HCT116 (cell line): ENCODE measurements at regions of chr1 and their contacts with region 1.

Region 1: GRCh38 chr1:158124999-158125398 is 55.7 kb upstream of the CD1D start:
- DNase-seq: peak; percentile 89
- ATAC-seq: peak; percentile 92
- H3K4me3 ChIP-seq: no peak overlapping the region
- H3K27ac ChIP-seq: no peak overlapping the region
- H3K4me1 ChIP-seq: 0 out of 4 replicates have a peak, but pooled peaks cover 0 to 2% of the 10 kb centered on the region in 2 experiments
- H3K27me3 ChIP-seq: peaks cover 5% of the 10 kb centered on the region; the same call in 1 of the 2 replicates
- CTCF ChIP-seq: peak; percentile 94 to 96 (median 95)
- POLR2A ChIP-seq: no peak
- RAD21 ChIP-seq: peak; percentile 97

Region 2: DNA sequence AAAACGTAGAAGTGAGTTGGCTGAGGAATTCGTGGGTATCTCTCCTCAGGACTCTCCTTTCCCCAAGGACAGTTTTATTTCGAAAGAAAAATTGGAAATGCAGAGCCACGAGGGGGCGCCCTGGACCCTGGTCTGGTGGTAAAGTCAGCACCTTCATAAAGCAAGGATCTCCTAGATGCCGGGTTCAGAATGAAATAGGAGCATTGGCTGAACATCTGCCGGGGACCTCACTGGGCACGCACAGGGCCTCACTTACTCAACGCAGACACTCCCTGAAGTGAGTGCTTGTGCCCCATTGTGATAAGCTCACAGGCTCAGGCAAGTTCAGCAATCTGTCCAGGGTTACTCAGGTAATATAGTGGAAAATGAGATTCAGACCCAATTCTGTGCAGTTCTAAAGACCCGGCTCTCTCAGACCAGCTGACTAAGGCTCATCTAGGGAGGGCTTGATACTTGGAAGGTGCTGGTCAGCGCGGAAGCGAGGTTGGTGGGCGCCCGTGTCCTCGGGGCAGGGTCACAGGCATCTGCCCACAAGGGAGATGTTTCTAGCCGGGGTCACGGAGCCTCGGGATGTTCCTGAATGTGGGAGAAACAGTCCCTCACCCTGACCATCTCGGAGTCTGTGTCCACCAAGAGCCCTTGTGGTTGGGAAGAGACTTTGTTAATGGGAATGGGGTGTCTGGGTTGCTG is 931.2 kb before region 1 on chr1:
- CTCF ChIA-PET with region 1: interaction called, 3 read pairs
- POLR2A ChIA-PET with region 1: no interaction called
- RAD21 ChIA-PET with region 1: no interaction called
- intact Hi-C with region 1: loop called (anchors 10 kb)
- DNase-seq: peak; percentile 57
- ATAC-seq: peak; percentile 75
- H3K4me3 ChIP-seq: no peak overlapping the region
- H3K27ac ChIP-seq: no peak overlapping the region
- H3K4me1 ChIP-seq: peaks cover 0 to 5% of the 10 kb centered on the region in 2 experiments; a peak in 1 of 4 replicates
- H3K27me3 ChIP-seq: no peaks in the 10 kb centered on the region
- CTCF ChIP-seq: peak; percentile 67 to 84 (median 75); a peak in 5 of 6 replicates
- POLR2A ChIP-seq: no peak
- RAD21 ChIP-seq: peak; percentile 62

Region 3: GRCh38 chr1:157580179-157580827 is 544.7 kb before region 1 on chr1:
- CTCF ChIA-PET with region 1: interaction called, 10 read pairs
- POLR2A ChIA-PET with region 1: no interaction called
- RAD21 ChIA-PET with region 1: interaction called in 1 of 2 experiments, 3 read pairs
- intact Hi-C with region 1: loop called (anchors 10 kb)
- DNase-seq: peak; percentile 71
- ATAC-seq: peak; percentile 82
- H3K4me3 ChIP-seq: no peak overlapping the region
- H3K27ac ChIP-seq: no peak overlapping the region
- H3K4me1 ChIP-seq: no peaks in the 10 kb centered on the region
- H3K27me3 ChIP-seq: peaks cover 29% of the 10 kb centered on the region
- CTCF ChIP-seq: peak; percentile 49 to 78 (median 61); a peak in 5 of 6 replicates
- POLR2A ChIP-seq: no peak
- RAD21 ChIP-seq: peak; percentile 59

Region 4: GRCh38 chr1:157878059-157878458 is 246.9 kb before region 1 on chr1:
- CTCF ChIA-PET with region 1: interaction called, 9 read pairs
- POLR2A ChIA-PET with region 1: no interaction called
- RAD21 ChIA-PET with region 1: interaction called in 1 of 2 experiments, 3 read pairs
- intact Hi-C with region 1: loop called (anchors 1 kb)
- DNase-seq: peak; percentile 46
- ATAC-seq: peak; percentile 94
- H3K4me3 ChIP-seq: no peak overlapping the region
- H3K27ac ChIP-seq: no peak overlapping the region
- H3K4me1 ChIP-seq: no peaks in the 10 kb centered on the region
- H3K27me3 ChIP-seq: peaks cover 40% of the 10 kb centered on the region
- CTCF ChIP-seq: peak; percentile 51 to 59 (median 55); a peak in 5 of 6 replicates
- POLR2A ChIP-seq: no peak
- RAD21 ChIP-seq: peak; percentile 62

Region 5: GRCh38 chr1:157992031-157992832 is 132.8 kb before region 1 on chr1:
- CTCF ChIA-PET with region 1: interaction called, 223 read pairs
- POLR2A ChIA-PET with region 1: interaction called, 8 read pairs
- RAD21 ChIA-PET with region 1: interaction called, 10 to 18 read pairs
- intact Hi-C with region 1: loop called (anchors 1 kb)
- DNase-seq: no peak
- ATAC-seq: peak; percentile 67
- H3K4me3 ChIP-seq: 0 out of 4 replicates have a peak overlapping the region, but pooled peaks of 1 of the 2 experiments have one; percentile 93
- H3K27ac ChIP-seq: peak overlapping the region; percentile 45; the same call in 1 of the 2 replicates
- H3K4me1 ChIP-seq: peaks cover 10 to 26% of the 10 kb centered on the region in 2 experiments; a peak in 3 of 4 replicates
- H3K27me3 ChIP-seq: peaks cover 10% of the 10 kb centered on the region; the same call in 1 of the 2 replicates
- CTCF ChIP-seq: peak; percentile 97 to 98 (median 97)
- POLR2A ChIP-seq: no peak
- RAD21 ChIP-seq: peak; percentile 98